Heart right ventricle (tissue), 16 donors: ENCODE measurements at regions of chr9 and their contacts with region 1.

Region 1: GRCh38 chr9:73149371-73150067 is 2.1 kb upstream of the ANXA1 start:
- DNase-seq: no peak
- ATAC-seq: peak in 4 of 8 donors; percentile 40 to 67 (median 44)
- H3K4me3 ChIP-seq: peak overlapping the region in 3 of 10 donors; percentile 2 to 16 (median 13)
- H3K27ac ChIP-seq: peak overlapping the region in 8 of 10 donors; percentile 1 to 84 (median 52)
- H3K4me1 ChIP-seq: peaks cover 0 to 62% (median 26%) of the 10 kb centered on the region in 9 donors
- H3K27me3 ChIP-seq: no peaks in the 10 kb centered on the region
- CTCF ChIP-seq: no peak

Region 2: DNA sequence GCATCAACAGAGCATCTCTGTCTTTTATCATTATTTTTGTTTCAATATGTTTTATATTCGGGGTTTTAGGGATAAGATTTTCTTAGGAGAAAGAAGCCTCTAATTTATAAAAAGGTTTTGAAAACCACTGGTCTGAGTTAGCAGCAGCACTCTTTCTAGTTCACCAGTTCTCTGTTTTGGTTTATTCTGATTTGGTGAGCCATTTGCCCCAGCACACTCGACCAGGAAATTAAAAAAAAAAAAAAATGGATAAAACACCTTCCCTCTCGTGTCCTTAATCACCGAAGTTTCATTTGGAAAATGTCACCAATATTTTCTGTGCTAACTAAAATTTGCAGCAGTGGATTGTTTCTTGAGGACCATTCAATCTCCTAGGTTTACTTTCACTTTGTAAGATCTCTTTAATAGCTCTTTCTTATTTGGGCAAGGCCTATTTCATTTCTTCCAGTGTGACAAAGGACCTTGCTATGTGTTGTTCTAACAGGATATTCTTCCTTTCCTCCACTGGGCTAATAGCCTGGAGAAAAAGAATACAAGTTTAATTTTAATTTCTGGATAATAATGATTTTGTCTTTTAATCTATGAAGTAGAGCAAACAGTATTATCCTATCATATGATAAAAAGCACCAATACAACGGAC is 55.7 kb before region 1 on chr9:
- intact Hi-C with region 1: no loop called
- DNase-seq: no peak
- ATAC-seq: peak in 1 of 8 donors; percentile 65
- H3K4me3 ChIP-seq: peak overlapping the region in 6 of 10 donors; percentile 6 to 32 (median 22)
- H3K27ac ChIP-seq: peak overlapping the region in 2 of 10 donors; percentile 29 to 41
- H3K4me1 ChIP-seq: peaks cover 0 to 8% (median 0%) of the 10 kb centered on the region in 9 donors
- H3K27me3 ChIP-seq: no peaks in the 10 kb centered on the region
- CTCF ChIP-seq: no peak

Region 3: GRCh38 chr9:73132034-73132776 is 17.3 kb before region 1 on chr9:
- intact Hi-C with region 1: loop called in 1 of 10 experiments (anchors 2 kb)
- DNase-seq: peak; percentile 54 to 79
- ATAC-seq: peak; percentile 38 to 96 (median 94)
- H3K4me3 ChIP-seq: peak overlapping the region; percentile 8 to 64 (median 52)
- H3K27ac ChIP-seq: peak overlapping the region; percentile 14 to 91 (median 80)
- H3K4me1 ChIP-seq: peaks cover 0 to 29% (median 12%) of the 10 kb centered on the region in 9 donors
- H3K27me3 ChIP-seq: no peaks in the 10 kb centered on the region
- CTCF ChIP-seq: no peak